CD14-positive monocyte (primary cell): ENCODE measurements at regions of chr20 and their contacts with region 1.

Region 1: DNA sequence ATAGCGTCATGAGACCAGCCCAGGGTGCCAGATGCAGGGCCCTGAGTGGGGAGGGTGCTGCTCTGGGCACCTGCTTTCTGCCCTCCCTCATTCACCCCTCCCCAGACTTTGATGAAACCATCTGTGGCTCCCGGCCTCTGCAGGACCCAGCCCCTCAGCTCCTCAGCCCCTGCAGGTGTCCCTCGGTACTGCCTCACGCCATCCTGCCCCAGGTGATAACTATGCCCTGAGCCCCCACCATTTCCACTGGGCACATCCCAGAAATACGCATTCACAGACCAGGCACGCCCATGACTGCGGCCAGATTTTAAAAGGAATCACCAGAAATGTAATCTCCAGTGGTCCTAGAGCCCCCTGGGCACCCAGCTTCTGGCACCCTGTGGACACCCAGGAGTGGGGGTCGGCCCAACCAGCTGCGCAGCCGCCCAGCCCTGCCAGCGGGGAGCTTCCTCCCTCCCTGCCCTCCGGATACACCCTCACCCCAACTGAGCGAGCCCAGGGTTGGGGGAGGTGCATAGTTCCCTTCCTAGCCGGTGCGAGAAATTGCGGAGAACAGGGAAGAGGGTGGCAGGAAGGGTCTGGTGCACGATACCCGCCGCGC is 615 bp upstream of the NTSR1 start:
- DNase-seq: peak in 2 of 3 donors; percentile 34 to 44
- H3K4me3 ChIP-seq: peak overlapping the region; percentile 12 to 66 (median 37)
- H3K4me3 Mint-ChIP-seq: peak overlapping the region; percentile 82 to 91
- H3K27ac ChIP-seq: no peak overlapping the region
- H3K27ac Mint-ChIP-seq: peak overlapping the region in 4 of 7 donors; percentile 15 to 62 (median 44)
- H3K4me1 ChIP-seq: peaks cover 55 to 74% of the 10 kb centered on the region in 2 donors
- H3K4me1 Mint-ChIP-seq: peaks cover 61% of the 10 kb centered on the region
- H3K27me3 ChIP-seq: peaks cover 0 to 24% of the 10 kb centered on the region in 2 donors
- H3K27me3 Mint-ChIP-seq: peaks cover 24 to 48% (median 43%) of the 10 kb centered on the region in 3 donors
- CTCF ChIP-seq: peak; percentile 56

Region 2: GRCh38 chr20:62576815-62577506 is 131.1 kb before region 1 on chr20:
- intact Hi-C with region 1: no loop called
- DNase-seq: no peak
- H3K4me3 ChIP-seq: no peak overlapping the region
- H3K4me3 Mint-ChIP-seq: no peak overlapping the region
- H3K27ac ChIP-seq: no peak overlapping the region
- H3K27ac Mint-ChIP-seq: no peak overlapping the region
- H3K4me1 ChIP-seq: no peaks in the 10 kb centered on the region
- H3K4me1 Mint-ChIP-seq: peaks cover under 1% of the 10 kb centered on the region
- H3K27me3 ChIP-seq: peaks cover 5 to 26% of the 10 kb centered on the region in 2 donors
- H3K27me3 Mint-ChIP-seq: peaks cover 24 to 62% (median 53%) of the 10 kb centered on the region in 3 donors
- CTCF ChIP-seq: no peak

Region 3: DNA sequence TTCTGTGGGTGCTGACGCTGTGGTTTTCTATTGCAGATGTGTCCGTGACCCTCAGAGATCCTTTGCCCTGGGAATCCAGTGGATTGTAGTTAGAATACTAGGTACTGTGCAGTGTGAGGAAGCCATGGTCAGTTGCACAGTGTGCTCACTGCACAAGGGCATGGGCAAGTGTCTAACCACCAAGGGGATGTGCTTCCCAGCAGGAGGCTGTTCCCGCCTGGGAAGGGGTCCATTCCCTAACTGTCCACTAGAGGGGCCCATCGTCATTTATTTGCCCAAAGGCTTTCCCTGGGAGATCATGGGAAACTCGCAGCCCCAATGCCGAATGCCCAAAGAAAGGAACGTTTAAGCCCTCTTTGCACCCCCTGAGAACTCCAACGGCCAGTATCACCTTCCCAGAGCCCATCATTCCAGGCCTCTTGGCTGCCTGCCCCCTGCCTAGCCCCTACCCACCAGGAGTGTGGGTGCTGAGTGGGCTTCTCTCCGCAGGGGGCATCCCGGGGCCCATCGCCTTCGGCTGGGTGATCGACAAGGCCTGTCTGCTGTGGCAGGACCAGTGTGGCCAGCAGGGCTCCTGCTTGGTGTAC is 39.5 kb before region 1 on chr20:
- intact Hi-C with region 1: loop called in 1 of 2 experiments (anchors 5 kb)
- DNase-seq: peak in 2 of 3 donors; percentile 69 to 73
- H3K4me3 ChIP-seq: no peak overlapping the region
- H3K4me3 Mint-ChIP-seq: no peak overlapping the region
- H3K27ac ChIP-seq: no peak overlapping the region
- H3K27ac Mint-ChIP-seq: no peak overlapping the region
- H3K4me1 ChIP-seq: peaks cover 32 to 65% of the 10 kb centered on the region in 2 donors
- H3K4me1 Mint-ChIP-seq: peaks cover 47% of the 10 kb centered on the region
- H3K27me3 ChIP-seq: no peaks in the 10 kb centered on the region
- H3K27me3 Mint-ChIP-seq: peaks cover 0 to 2% (median 1%) of the 10 kb centered on the region in 3 donors
- CTCF ChIP-seq: peak; percentile 96

Region 4: GRCh38 chr20:62734881-62735821 is 27.1 kb after region 1 on chr20:
- intact Hi-C with region 1: loop called in 1 of 2 experiments (anchors 2 kb)
- DNase-seq: peak; percentile 51 to 66 (median 64)
- H3K4me3 ChIP-seq: peak overlapping the region in 1 of 3 experiments; percentile 18
- H3K4me3 Mint-ChIP-seq: peak overlapping the region; percentile 16 to 42
- H3K27ac ChIP-seq: peak overlapping the region; percentile 27 to 67
- H3K27ac Mint-ChIP-seq: peak overlapping the region; percentile 37 to 85 (median 58)
- H3K4me1 ChIP-seq: peaks cover 62 to 90% of the 10 kb centered on the region in 2 donors
- H3K4me1 Mint-ChIP-seq: peaks cover 79% of the 10 kb centered on the region
- H3K27me3 ChIP-seq: no peaks in the 10 kb centered on the region
- H3K27me3 Mint-ChIP-seq: peaks cover 0 to 7% (median 0%) of the 10 kb centered on the region in 3 donors
- CTCF ChIP-seq: no peak

Region 5: GRCh38 chr20:62740286-62741141 is 32.5 kb after region 1 on chr20:
- intact Hi-C with region 1: loop called in 1 of 2 experiments (anchors 5 kb)
- DNase-seq: peak; percentile 92 to 99 (median 96)
- H3K4me3 ChIP-seq: peak overlapping the region in 2 of 3 experiments; percentile 10 to 72
- H3K4me3 Mint-ChIP-seq: peak overlapping the region; percentile 68 to 77
- H3K27ac ChIP-seq: peak overlapping the region; percentile 93 to 99
- H3K27ac Mint-ChIP-seq: peak overlapping the region; percentile 94 to 99 (median 97)
- H3K4me1 ChIP-seq: peaks cover 41 to 65% of the 10 kb centered on the region in 2 donors
- H3K4me1 Mint-ChIP-seq: peaks cover 57% of the 10 kb centered on the region
- H3K27me3 ChIP-seq: no peaks in the 10 kb centered on the region
- H3K27me3 Mint-ChIP-seq: peaks cover 1 to 7% (median 2%) of the 10 kb centered on the region in 3 donors
- CTCF ChIP-seq: no peak